Activated CD4-positive, alpha-beta T cell treated with anti-CD3 and anti-CD28 coated beads, Interleukin-2, amount 10 ng/mL, durations not matched to agents 24 days and 14 days (primary cell): ENCODE measurements at regions of chr5 and their contacts with region 1.

Region 1: GRCh38 chr5:40627706-40628105 is 52.0 kb upstream of the PTGER4 start:
- DNase-seq: no peak
- H3K4me3 Mint-ChIP-seq: no peak overlapping the region
- H3K27ac Mint-ChIP-seq: no peak overlapping the region
- H3K4me1 Mint-ChIP-seq: peaks cover 21% of the 10 kb centered on the region
- H3K27me3 Mint-ChIP-seq: no peaks in the 10 kb centered on the region

Region 2: GRCh38 chr5:40594811-40595210 is 32.9 kb before region 1 on chr5:
- intact Hi-C with region 1: loop called (anchors 1 kb)
- DNase-seq: no peak
- H3K4me3 Mint-ChIP-seq: no peak overlapping the region
- H3K27ac Mint-ChIP-seq: no peak overlapping the region
- H3K4me1 Mint-ChIP-seq: peaks cover 27% of the 10 kb centered on the region
- H3K27me3 Mint-ChIP-seq: no peaks in the 10 kb centered on the region